Left cardiac atrium (tissue), 4 donors: ENCODE measurements at regions of chr7 and their contacts with region 1.

Region 1: GRCh38 chr7:100675581-100676350 is 2.2 kb downstream of the GNB2 start:
- DNase-seq: peak; percentile 88
- ATAC-seq: peak; percentile 20 to 37

Region 2: GRCh38 chr7:99404235-99404966 is 1271.4 kb before region 1 on chr7:
- intact Hi-C with region 1: no loop called
- DNase-seq: peak; percentile 46
- ATAC-seq: no peak

Region 3: DNA sequence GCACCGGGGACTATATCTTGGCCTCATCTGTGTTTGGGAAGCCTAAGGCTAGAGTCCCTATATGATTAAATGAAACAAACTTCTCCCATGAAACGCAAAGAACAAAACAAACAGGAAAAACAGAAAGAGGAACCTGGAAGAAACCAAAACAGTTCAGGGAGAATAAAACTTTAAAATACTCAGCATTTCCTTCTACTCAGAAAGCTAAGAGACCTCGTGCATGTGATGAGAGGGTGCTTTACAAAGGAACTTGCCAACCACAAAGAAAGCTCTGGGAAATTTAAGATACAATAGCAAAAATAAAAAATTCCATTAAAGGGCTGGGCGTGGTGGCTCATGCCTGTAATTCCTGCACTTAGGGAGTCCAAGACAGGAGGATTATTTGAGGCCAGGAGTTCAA is 295.6 kb before region 1 on chr7:
- intact Hi-C with region 1: no loop called
- DNase-seq: no peak
- ATAC-seq: peak in 1 of 2 donors; percentile 37

Region 4: DNA sequence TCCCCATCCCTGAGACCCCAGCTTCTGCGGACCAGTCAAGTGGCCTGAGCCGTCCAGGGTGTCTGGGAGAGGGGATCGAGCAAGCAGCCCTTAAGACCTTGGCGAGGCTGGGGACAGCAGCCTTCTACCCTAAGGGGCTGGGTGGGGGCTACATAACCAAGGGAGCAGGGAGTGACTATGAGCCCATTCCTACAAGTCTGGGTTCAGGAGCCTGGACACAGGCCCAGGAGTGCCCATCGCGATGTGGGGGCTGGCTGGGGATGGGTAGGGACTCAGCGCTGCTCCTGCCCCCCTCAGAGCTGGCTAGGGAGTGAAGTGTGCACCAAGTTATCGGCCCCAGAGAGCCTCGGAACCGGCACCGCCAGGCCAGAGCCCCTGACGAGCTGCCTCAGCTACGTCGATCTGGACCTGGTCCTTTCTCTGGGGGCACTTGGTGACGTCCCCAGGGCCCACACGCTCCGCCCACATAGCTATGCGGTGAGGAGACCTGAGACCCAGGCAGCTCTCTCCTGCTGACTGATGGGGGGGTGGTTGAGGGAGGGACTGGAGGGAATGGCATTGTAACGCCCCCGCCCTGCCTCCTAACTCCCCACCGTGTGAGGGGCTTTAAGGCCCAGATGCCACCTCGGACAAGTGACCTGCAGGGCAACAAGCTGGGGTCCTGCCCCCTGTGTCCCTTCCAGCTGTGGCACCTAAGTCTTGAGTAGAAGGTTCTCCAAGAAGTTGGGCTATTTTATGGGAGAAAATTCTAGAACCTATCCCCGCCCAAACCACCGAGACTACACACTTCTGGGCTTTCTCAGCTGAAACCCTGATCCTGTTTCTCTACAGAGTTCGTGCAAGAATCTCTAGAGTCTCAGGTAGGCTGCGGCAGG is 104.6 kb before region 1 on chr7:
- intact Hi-C with region 1: loop called in 1 of 2 experiments (anchors 10 kb)
- DNase-seq: no peak
- ATAC-seq: no peak

Region 5: GRCh38 chr7:100604028-100604975 is 71.5 kb before region 1 on chr7:
- intact Hi-C with region 1: loop called in 1 of 2 experiments (anchors 10 kb)
- DNase-seq: peak; percentile 79
- ATAC-seq: peak; percentile 79 to 85

Region 6: GRCh38 chr7:100611974-100612729 is 63.6 kb before region 1 on chr7 and contains the start of gene MOSPD3:
- intact Hi-C with region 1: loop called (anchors 5 to 10 kb)
- DNase-seq: peak; percentile 98
- ATAC-seq: peak; percentile 98 to 99
- total RNA-seq, gene MOSPD3: 11.0 to 13.3 TPM

Region 7: GRCh38 chr7:100763556-100764140 is 87.9 kb after region 1 on chr7:
- intact Hi-C with region 1: no loop called
- DNase-seq: no peak
- ATAC-seq: no peak